Sigmoid colon (tissue), 7 donors: ENCODE measurements at regions of chr4 and their contacts with region 1.

Region 1: GRCh38 chr4:87848622-87849351 is 16.0 kb downstream of the MEPE start:
- DNase-seq: peak; percentile 73
- H3K4me3 ChIP-seq: peak overlapping the region in 3 of 4 donors; percentile 1 to 35 (median 29)
- H3K27ac ChIP-seq: peak overlapping the region in 3 of 4 donors; percentile 24 to 33 (median 30)
- H3K4me1 ChIP-seq: peaks cover 0 to 15% (median 5%) of the 10 kb centered on the region in 4 donors
- H3K27me3 ChIP-seq: no peaks in the 10 kb centered on the region
- CTCF ChIP-seq: peak; percentile 29 to 63 (median 45)
- EP300 ChIP-seq: no peak
- POLR2A ChIP-seq: no peak

Region 2: DNA sequence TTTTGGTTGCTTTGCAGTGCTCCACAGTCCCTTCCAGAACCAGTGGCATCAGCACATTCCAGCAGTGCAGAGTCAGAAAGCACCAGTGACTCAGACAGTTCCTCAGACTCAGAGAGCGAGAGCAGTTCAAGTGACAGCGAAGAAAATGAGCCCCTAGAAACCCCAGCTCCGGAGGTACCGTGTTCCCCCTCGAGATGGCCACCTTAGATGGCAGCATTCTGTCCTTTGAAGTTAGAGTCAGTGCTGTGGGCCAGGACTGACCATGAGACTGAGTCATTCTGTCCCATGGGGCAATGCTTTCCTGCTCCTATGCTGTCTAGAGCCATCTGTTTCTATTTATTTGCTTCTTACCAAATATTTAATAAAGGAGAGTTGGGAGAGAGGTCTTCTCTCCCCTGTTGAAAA is 740.6 kb before region 1 on chr4:
- intact Hi-C with region 1: no loop called
- DNase-seq: peak; percentile 71
- H3K4me3 ChIP-seq: no peak overlapping the region
- H3K27ac ChIP-seq: peak overlapping the region; percentile 65 to 84 (median 74)
- H3K4me1 ChIP-seq: peaks cover 0 to 62% (median 41%) of the 10 kb centered on the region in 4 donors
- H3K27me3 ChIP-seq: no peaks in the 10 kb centered on the region
- CTCF ChIP-seq: no peak
- EP300 ChIP-seq: no peak
- POLR2A ChIP-seq: no peak

Region 3: DNA sequence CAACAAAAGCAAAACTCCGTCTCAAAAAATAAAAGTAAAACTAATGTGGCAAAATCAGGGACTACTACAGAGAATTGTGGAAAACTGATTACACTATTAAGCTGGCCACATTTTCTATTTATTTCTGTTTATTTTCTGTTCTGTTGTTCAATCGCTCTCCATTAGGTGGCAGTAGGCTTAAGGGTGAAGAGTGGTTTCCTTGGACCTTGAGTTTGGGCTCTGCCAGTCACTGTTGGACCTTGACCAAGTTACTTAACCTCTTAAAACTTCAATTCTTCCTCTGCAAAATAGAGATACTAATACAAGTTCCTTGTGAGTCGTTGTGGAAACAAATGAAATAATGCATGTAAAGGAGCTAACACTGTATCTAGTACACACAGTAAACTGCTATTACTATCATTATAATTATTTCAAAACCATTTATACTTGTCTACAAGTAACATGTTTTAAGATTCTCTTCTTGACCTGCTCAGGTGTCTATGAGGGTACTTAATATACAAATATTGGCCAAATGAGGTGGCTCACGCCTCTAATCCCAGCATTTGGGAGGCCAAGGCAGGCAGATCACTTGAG is 473.0 kb before region 1 on chr4:
- intact Hi-C with region 1: loop called (anchors 5 kb)
- DNase-seq: peak; percentile 76
- H3K4me3 ChIP-seq: no peak overlapping the region
- H3K27ac ChIP-seq: peak overlapping the region in 2 of 4 donors; percentile 8 to 58
- H3K4me1 ChIP-seq: peaks cover 0 to 8% (median 5%) of the 10 kb centered on the region in 4 donors
- H3K27me3 ChIP-seq: no peaks in the 10 kb centered on the region
- CTCF ChIP-seq: peak; percentile 67 to 79 (median 75)
- EP300 ChIP-seq: no peak
- POLR2A ChIP-seq: no peak

Region 4: DNA sequence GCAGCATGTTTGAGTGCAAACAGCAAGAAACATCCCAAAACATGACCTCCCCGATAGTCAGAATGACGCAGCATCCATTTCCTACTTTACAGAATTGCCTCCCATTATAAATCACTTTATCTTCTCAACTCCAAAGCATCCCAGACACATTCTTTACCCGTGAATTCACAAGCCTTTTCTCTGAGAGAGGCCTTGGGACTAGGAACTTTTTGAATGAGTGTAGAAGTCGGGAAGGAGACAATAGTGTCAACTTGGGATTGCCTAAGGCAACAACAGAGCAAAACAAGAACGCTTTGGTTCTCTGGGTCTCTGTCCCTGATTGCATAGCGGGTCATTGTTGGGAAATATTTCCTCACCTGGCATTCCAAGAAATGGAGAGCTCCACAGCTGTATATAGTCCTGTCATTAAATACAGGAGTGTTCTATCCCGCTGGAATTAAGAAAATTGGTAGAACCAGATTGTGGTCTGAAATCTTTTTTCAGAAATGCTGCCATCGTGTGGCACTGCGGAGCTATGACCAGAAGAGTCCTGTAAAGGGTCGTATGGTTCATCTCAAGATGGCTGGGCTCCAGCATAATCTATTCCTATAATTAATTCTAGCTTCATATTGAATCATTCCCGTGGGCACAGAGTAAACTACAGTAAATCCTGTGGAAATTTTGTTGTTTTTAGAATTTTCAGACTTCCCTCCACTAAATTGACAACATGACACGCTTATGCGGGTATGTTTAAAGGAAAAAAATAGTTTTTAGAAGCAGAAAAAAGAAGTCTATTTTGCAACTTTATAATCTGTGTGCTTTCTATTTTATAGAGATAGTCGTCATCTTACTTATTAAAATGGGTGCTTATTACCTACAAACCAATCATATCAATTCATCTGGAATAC is 124.7 kb after region 1 on chr4:
- intact Hi-C with region 1: loop called (anchors 1 kb)
- DNase-seq: no peak
- H3K4me3 ChIP-seq: peak overlapping the region in 1 of 4 donors; percentile 4
- H3K27ac ChIP-seq: peak overlapping the region in 2 of 4 donors; percentile 11
- H3K4me1 ChIP-seq: peaks cover 0 to 5% (median 2%) of the 10 kb centered on the region in 4 donors
- H3K27me3 ChIP-seq: no peaks in the 10 kb centered on the region
- CTCF ChIP-seq: peak; percentile 29 to 78 (median 71)
- EP300 ChIP-seq: no peak
- POLR2A ChIP-seq: no peak